Mammary epithelial cell (primary cell): ENCODE measurements at regions of chr10 and their contacts with region 1.

Region 1: DNA sequence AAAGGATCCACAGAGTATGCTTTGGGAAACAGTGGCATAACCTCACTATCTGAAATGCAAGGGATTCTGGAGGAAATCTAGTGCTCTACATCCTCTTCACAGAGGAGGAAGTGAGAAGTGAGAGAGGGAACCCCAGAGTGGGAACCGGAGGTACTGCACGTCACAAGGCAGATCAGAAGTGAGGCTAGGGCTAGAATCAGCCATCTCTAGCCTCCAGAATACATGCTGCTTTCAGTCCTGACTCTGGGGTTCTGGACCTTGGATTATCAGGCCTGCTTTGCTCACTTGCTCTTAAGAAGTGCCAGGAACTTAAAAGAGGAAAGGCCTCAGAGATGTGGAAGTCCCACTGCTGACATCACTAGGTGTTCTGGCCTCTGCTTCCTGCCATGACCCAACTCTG is 25.7 kb downstream of the ZNF503 start:
- DNase-seq: no peak
- H3K4me3 ChIP-seq: no peak overlapping the region
- H3K27ac ChIP-seq: no peak overlapping the region
- H3K4me1 ChIP-seq: no peaks in the 10 kb centered on the region
- H3K27me3 ChIP-seq: no peaks in the 10 kb centered on the region
- CTCF ChIP-seq: no peak

Region 2: GRCh38 chr10:75245491-75246250 is 130.2 kb before region 1 on chr10:
- CTCF ChIA-PET with region 1: no interaction called
- dilution Hi-C with region 1: loop called (anchors 10 kb)
- in situ Hi-C with region 1: no loop called
- intact Hi-C with region 1: no loop called
- DNase-seq: no peak
- H3K4me3 ChIP-seq: no peak overlapping the region
- H3K27ac ChIP-seq: no peak overlapping the region
- H3K4me1 ChIP-seq: peaks cover 8% of the 10 kb centered on the region
- H3K27me3 ChIP-seq: no peaks in the 10 kb centered on the region
- CTCF ChIP-seq: no peak